ENCODE measurements at regions of chr16 and their contacts with region 1.

Region 1: GRCh38 chr16:71610936-71611871 is 14.8 kb upstream of the MARVELD3 start:
- DNase-seq: peak; percentile 25
- ATAC-seq: peak; percentile 79
- H3K4me3 ChIP-seq: no peak overlapping the region
- H3K27ac ChIP-seq: no peak overlapping the region
- H3K4me1 ChIP-seq: peaks cover 5% of the 10 kb centered on the region; the same call in 1 of the 2 replicates
- H3K27me3 ChIP-seq: no peaks in the 10 kb centered on the region
- CTCF ChIP-seq: peak; percentile 97 to 98 (median 98); a peak in 5 of 6 replicates
- EP300 ChIP-seq: no peak
- POLR2A ChIP-seq: no peak
- RAD21 ChIP-seq: peak; percentile 93

Region 2: DNA sequence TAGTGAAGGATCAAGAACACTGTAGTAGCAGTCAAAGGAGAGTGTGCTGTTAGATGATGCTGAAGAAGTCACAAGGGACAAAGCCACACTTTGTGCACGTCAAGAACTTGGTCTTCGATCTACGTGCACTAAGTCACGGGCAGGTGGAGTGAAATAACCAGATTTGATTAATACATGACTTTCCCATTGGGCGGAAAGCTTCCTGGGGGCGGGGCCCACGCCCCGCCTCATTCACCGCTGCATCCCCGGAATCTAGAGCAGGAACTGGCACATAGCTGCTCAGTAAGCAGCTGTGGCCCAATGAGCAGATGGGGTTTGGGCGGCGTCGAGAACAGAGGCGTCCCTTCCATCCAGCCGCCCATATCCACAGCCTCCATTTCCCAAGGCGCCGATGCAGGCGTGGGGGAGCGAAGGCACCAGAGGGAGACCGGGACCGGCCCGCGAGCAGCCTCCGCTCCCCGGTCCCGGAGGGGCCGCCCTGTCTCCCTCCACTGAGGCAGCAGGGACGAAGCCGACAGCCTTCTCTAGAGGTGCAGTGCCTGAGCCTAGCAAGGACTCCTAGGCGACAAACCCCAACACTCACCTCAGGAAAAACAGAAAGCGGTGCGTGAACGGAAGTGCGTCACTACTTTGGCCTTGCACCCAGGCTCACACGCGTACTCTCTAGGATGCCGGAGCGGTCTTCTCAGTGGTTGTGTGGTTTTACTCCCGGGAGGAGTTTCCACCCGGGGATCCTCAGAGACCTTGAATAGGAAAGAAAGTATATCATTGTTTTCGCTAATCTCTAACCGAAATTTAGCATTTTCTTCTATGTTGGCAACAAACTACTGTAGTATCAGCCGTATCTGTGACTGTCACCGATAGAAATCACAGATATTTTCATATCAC is 127.0 kb before region 1 on chr16:
- CTCF ChIA-PET with region 1: interaction called, 7 read pairs
- POLR2A ChIA-PET with region 1: interaction called, 3 read pairs
- RAD21 ChIA-PET with region 1: interaction called, 4 read pairs
- SMC1A ChIA-PET with region 1: interaction called, 10 read pairs
- in situ Hi-C with region 1: no loop called
- intact Hi-C with region 1: no loop called
- DNase-seq: peak; percentile 82
- ATAC-seq: peak; percentile 94
- H3K4me3 ChIP-seq: peak overlapping the region; percentile 65
- H3K27ac ChIP-seq: peak overlapping the region; percentile 96
- H3K4me1 ChIP-seq: peaks cover 3% of the 10 kb centered on the region; the same call in 1 of the 2 replicates
- H3K27me3 ChIP-seq: no peaks in the 10 kb centered on the region
- CTCF ChIP-seq: no peak
- EP300 ChIP-seq: no peak
- POLR2A ChIP-seq: peak; percentile 86
- RAD21 ChIP-seq: no peak

Region 3: DNA sequence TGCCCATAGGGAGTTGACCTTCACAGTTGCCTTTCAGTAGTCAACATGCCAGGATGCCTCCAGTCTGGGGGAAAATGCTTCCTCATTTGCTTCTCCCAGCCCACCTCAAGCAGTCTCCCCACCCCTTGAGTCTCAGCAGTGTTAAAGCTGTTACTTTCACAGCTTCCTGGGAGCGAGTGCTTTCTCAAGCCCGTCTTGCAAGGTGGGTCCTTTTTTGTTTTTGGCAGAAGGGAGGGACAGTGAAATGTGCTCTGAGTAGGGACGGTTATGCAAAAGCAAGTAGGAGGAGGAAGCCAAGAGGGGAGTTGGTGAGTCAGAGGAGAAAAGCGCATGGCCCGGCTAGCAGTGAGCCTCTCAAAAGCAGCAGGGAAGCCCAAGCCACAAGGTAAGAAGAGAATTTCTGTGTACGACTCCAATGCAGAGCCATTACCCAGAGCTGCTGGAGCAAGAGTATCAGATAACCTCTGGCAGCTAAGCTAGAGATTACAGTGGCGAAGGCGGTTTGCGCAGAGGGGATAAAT is 85.0 kb before region 1 on chr16 and contains the start of gene CHST4:
- CTCF ChIA-PET with region 1: interaction called, 17 read pairs
- POLR2A ChIA-PET with region 1: no interaction called
- RAD21 ChIA-PET with region 1: interaction called, 4 read pairs
- SMC1A ChIA-PET with region 1: interaction called, 12 read pairs
- in situ Hi-C with region 1: no loop called
- intact Hi-C with region 1: no loop called
- DNase-seq: no peak
- ATAC-seq: peak; percentile 74
- H3K4me3 ChIP-seq: no peak within 1 kb of the TSS
- H3K27ac ChIP-seq: no peak within 1 kb of the TSS
- H3K4me1 ChIP-seq: no peaks in the 10 kb centered on the region; the same call in 1 of the 2 replicates
- H3K27me3 ChIP-seq: no peaks in the 10 kb centered on the region; a peak in 1 of 4 replicates
- CTCF ChIP-seq: no peak
- EP300 ChIP-seq: no peak
- POLR2A ChIP-seq: no peak
- RAD21 ChIP-seq: no peak
- polyA plus RNA-seq, gene CHST4: 0.60 to 1.4 TPM

Region 4: DNA sequence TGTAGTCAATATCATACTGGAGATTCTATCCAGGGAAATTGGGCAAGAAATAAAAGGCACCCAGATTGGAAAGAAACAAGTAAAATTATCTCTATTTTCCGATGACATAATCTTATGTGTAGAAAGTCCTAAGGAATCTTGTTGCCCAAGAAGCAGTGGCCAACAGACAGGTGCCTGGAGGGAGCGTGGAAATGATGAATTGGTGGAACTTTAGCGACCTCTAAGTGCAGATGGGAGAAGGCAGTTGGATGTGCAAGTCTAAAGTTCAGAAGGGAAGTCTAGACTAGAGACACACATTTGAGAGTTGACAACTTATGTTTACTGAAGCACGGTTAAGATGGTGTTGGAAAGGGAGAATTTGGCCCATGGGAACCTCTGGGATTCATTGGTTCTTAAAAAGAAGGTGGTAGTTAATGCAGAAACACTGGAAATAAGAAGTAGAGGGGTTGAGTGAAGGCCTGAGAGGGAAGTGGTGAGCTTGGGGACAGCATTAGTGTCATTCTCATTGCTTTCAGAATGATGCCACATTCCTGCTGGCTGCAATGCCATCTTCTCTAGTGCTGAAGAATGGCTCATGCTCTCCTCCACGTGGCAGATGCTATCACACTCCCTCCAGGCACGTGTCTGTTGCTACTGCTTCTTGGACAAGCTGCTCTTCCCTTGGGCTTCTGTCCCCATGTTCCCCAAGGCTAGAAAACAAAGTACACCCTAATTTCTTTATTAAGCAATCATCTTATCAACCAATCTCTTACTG is 58.3 kb before region 1 on chr16:
- CTCF ChIA-PET with region 1: interaction called, 16 read pairs
- POLR2A ChIA-PET with region 1: interaction called, 4 read pairs
- RAD21 ChIA-PET with region 1: interaction called, 7 read pairs
- SMC1A ChIA-PET with region 1: interaction called, 3 read pairs
- in situ Hi-C with region 1: no loop called
- intact Hi-C with region 1: no loop called
- DNase-seq: no peak
- ATAC-seq: peak; percentile 50
- H3K4me3 ChIP-seq: no peak overlapping the region
- H3K27ac ChIP-seq: no peak overlapping the region
- H3K4me1 ChIP-seq: no peaks in the 10 kb centered on the region
- H3K27me3 ChIP-seq: no peaks in the 10 kb centered on the region
- CTCF ChIP-seq: peak in 2 of 3 experiments; percentile 11 to 19; a peak in 2 of 6 replicates
- EP300 ChIP-seq: no peak
- POLR2A ChIP-seq: no peak
- RAD21 ChIP-seq: no peak

Region 5: GRCh38 chr16:71594000-71594646 is 17.1 kb before region 1 on chr16:
- CTCF ChIA-PET with region 1: interaction called, 12 read pairs
- POLR2A ChIA-PET with region 1: no interaction called
- RAD21 ChIA-PET with region 1: interaction called, 3 read pairs
- SMC1A ChIA-PET with region 1: interaction called, 5 read pairs
- in situ Hi-C with region 1: no loop called
- intact Hi-C with region 1: no loop called
- DNase-seq: no peak
- ATAC-seq: no peak
- H3K4me3 ChIP-seq: no peak overlapping the region
- H3K27ac ChIP-seq: no peak overlapping the region
- H3K4me1 ChIP-seq: no peaks in the 10 kb centered on the region
- H3K27me3 ChIP-seq: no peaks in the 10 kb centered on the region
- CTCF ChIP-seq: no peak
- EP300 ChIP-seq: no peak
- POLR2A ChIP-seq: no peak
- RAD21 ChIP-seq: no peak

Region 6: DNA sequence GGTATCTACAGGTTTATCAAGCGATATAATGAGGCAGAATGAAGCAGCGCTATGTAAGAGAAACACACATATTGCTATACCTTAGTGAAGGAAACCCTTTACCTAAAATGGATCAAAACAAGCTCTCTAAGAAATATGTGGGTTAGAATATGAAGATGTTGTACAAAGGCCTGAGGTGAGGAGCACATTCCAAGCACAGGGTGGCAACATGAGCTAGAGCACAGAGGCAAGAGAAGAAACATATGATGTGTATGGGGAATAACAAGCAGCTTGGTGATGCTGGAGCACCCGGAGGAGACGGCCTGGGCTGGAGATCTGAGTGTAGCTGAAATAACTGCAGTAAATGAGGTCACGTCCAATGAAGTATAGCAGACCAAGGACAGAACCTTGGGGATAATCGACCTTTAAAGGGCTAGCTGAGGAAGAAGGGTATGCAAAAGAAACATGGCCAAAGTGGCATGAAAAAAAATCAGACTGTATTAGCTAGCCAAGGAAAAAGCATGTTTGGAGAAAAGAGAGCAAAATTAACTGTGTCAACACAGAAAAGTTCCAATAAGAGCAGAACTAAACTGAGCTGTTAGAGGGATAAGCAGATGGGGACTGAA is 58.8 kb after region 1 on chr16:
- CTCF ChIA-PET with region 1: interaction called, 10 read pairs
- POLR2A ChIA-PET with region 1: no interaction called
- RAD21 ChIA-PET with region 1: interaction called, 3 read pairs
- SMC1A ChIA-PET with region 1: interaction called, 4 read pairs
- in situ Hi-C with region 1: no loop called
- intact Hi-C with region 1: no loop called
- DNase-seq: no peak
- ATAC-seq: no peak
- H3K4me3 ChIP-seq: no peak overlapping the region
- H3K27ac ChIP-seq: no peak overlapping the region
- H3K4me1 ChIP-seq: no peaks in the 10 kb centered on the region
- H3K27me3 ChIP-seq: no peaks in the 10 kb centered on the region
- CTCF ChIP-seq: peak in 1 of 3 experiments; percentile 14; a peak in 1 of 6 replicates
- EP300 ChIP-seq: no peak
- POLR2A ChIP-seq: no peak
- RAD21 ChIP-seq: no peak

Measured in GM12878 (cell line).